ENCODE measurements at regions of chr12 and their contacts with region 1.

Region 1: DNA sequence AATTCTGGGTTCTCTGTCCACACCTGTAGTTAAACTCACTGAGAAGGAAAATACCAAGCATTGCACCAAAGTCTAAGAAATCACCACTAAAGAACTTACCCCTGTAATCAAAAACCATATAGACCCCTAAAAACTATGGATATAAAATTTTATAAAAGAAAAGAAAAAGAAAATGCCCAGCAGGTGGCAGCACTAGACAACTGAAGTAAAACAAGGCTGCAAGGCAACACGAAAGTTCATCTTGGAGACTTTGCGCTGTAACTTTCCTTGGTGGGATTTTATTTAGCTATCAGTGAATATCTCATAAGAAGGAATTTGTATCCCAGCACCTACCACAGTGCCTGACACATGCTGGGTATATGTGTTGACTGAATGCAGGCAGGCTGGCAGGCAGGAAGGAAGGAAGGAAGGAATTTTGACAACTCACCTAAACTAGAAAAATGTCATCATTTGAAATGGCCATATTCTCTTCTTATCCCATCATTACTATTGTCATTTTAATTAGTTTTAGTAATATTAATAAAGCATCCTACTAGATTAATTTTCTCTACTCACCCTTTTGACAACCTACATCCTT is 68.2 kb upstream of the ETV6 start:
- DNase-seq: peak; percentile 31 to 85 (median 68)
- ATAC-seq: no peak
- H3K4me3 Mint-ChIP-seq: no peak overlapping the region
- H3K27ac Mint-ChIP-seq: peak overlapping the region in 2 of 10 donors; percentile 64 to 86
- H3K4me1 Mint-ChIP-seq: peaks cover 2 to 8% (median 4%) of the 10 kb centered on the region in 4 donors
- H3K27me3 Mint-ChIP-seq: peaks cover 0 to 11% (median 2%) of the 10 kb centered on the region in 5 donors

Region 2: GRCh38 chr12:12032851-12033588 is 451.8 kb after region 1 on chr12:
- POLR2A ChIA-PET with region 1: interaction called, 13 read pairs
- DNase-seq: peak; percentile 31 to 84 (median 58)
- ATAC-seq: peak; percentile 73 to 89
- H3K4me3 Mint-ChIP-seq: peak overlapping the region; percentile 73 to 82 (median 80)
- H3K27ac Mint-ChIP-seq: peak overlapping the region in 9 of 10 donors; percentile 22 to 84 (median 53)
- H3K4me1 Mint-ChIP-seq: peaks cover 0 to 20% (median 13%) of the 10 kb centered on the region in 4 donors
- H3K27me3 Mint-ChIP-seq: peaks cover 0 to 4% (median 0%) of the 10 kb centered on the region in 5 donors

Measured in naive thymus-derived CD8-positive, alpha-beta T cell (primary cell).